Posterior cingulate gyrus (tissue), 11 donors: ENCODE measurements at regions of chr18 and their contacts with region 1.

Region 1: GRCh38 chr18:59070181-59070912 is 69.3 kb upstream of the SEC11C start:
- DNase-seq: peak; percentile 79 to 98 (median 91)

Region 2: DNA sequence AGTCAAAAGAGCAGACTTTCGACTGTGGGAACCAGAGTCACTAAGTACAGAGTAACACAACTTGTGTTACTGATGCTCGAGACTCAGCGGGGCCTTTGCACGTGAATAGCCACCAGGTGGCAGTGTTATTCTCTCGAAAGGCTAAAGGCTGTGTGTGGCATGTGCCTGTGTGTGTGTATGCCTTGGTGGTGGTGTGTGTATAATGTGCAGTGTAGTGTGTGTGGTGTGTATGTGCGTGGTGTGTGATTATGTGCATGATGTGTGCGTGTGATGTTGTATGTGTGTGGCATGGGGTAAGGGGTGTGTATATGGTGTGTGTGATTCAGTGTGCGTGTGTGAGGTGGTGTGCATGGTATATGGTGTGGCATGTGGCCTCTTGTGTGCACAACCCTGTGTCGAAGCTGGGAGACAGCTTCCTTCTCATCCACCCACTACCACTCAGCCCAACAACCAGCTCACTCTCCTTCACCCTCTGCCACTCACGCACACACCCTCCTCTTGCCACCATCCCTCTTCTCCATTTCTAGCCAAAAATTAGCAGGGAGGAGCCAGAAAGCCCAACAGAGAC is 288.6 kb before region 1 on chr18:
- intact Hi-C with region 1: loop called (anchors 1 kb)
- DNase-seq: peak; percentile 74 to 97 (median 86)